ENCODE measurements at regions of chr1 and their contacts with region 1.

Region 1: DNA sequence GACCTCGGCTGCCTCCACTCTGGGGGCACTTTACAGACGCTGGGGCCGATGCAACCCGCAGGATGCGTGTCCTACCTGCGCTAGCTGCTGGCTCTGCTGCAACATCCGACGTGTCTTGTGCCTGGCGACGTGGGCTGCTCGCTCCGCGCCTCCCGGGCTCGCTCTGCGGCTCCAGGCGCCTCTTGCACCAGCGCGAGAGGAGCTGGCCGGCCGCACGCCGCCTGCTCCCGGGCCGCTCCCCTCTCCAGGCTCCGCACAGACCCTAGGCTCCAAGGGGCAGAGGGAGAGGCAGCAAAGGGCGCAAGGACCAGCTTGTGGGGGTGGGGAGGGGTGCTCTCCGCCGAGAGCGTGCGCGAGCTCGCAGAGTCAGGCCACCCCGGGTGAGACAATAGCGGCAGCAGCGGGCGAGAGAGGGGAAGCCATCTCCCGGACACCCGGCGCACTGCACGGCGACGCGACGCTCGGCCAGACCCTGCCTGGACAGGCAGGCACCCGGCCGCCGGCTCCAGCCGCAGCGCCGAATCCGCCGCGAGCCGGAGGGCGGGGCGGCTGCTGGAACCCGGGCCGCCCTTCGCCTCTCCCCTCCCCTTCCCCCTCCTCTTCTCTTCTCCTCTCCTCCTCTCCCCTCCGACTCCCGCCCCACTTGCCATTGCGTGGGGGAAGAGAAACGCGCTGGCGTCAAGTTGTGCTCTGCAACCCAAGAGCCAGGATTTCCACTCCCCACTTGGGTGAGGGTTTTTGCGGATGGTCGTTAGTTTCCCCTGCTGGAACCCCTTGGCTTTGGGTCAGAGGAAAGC is at the start of gene PIK3C2B:
- DNase-seq: peak; percentile 54 to 80 (median 72)
- ATAC-seq: peak; percentile 83
- H3K4me3 ChIP-seq: peak within 1 kb of the TSS; percentile 84
- H3K4me3 Mint-ChIP-seq: peak within 1 kb of the TSS; percentile 92 to 98 (median 95)
- H3K27ac ChIP-seq: peak within 1 kb of the TSS; percentile 87
- H3K27ac Mint-ChIP-seq: peak within 1 kb of the TSS; percentile 83 to 98 (median 93)
- H3K4me1 ChIP-seq: peaks cover 23 to 35% of the 10 kb centered on the region in 2 donors
- H3K4me1 Mint-ChIP-seq: peaks cover 37 to 89% (median 73%) of the 10 kb centered on the region in 7 donors
- H3K27me3 ChIP-seq: no peaks in the 10 kb centered on the region
- H3K27me3 Mint-ChIP-seq: peaks cover 0 to 2% (median 0%) of the 10 kb centered on the region in 5 donors
- total RNA-seq, gene PIK3C2B: 26.8 to 41.9 (median 32.5) TPM

Region 2: GRCh38 chr1:204431310-204432165 is 62.9 kb before region 1 on chr1:
- CTCF ChIA-PET with region 1: interaction called, 434 read pairs
- POLR2A ChIA-PET with region 1: interaction called, 5 read pairs
- intact Hi-C with region 1: loop called (anchors 2 kb)
- DNase-seq: peak; percentile 52 to 75 (median 69)
- ATAC-seq: peak; percentile 88
- H3K4me3 ChIP-seq: no peak overlapping the region
- H3K4me3 Mint-ChIP-seq: no peak overlapping the region
- H3K27ac ChIP-seq: no peak overlapping the region
- H3K27ac Mint-ChIP-seq: peak overlapping the region in 5 of 9 donors; percentile 6 to 69 (median 42)
- H3K4me1 ChIP-seq: no peaks in the 10 kb centered on the region
- H3K4me1 Mint-ChIP-seq: peaks cover 0 to 13% (median 4%) of the 10 kb centered on the region in 7 donors
- H3K27me3 ChIP-seq: no peaks in the 10 kb centered on the region
- H3K27me3 Mint-ChIP-seq: no peaks in the 10 kb centered on the region

Region 3: DNA sequence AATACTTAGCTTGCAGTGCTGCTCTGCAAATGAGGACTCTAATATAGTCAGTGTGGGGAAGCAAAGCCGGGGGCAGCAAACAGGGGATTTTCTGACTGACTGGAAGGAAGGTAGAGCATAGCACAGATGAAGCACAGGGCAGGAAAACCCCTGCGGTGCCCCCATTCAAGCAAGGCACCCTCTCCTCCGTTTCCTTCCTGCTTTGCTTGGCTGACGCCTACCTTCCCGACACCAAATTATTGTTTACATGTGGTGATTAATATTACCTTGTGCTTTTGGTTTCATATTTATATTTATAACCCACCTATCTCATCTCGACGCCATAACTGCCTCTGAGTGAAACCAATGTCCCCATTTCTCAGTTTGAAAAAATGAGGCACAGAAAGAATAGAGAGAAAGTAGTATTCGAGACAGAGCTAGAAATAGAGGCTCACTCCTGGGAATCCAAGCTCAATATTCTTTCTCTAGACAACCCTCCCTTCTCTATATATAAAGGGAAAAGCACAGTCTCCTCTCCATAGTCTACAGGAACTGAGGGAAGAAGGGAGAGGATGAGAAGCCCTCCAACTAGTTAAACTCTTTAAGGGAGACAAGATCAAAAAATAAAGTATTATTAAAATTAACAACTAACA is 41.2 kb before region 1 on chr1:
- CTCF ChIA-PET with region 1: interaction called, 434 read pairs
- POLR2A ChIA-PET with region 1: interaction called, 4 read pairs
- intact Hi-C with region 1: loop called in 1 of 2 experiments (anchors 1 kb)
- DNase-seq: peak; percentile 27 to 88 (median 67)
- ATAC-seq: peak; percentile 97
- H3K4me3 ChIP-seq: peak overlapping the region; percentile 16
- H3K4me3 Mint-ChIP-seq: peak overlapping the region; percentile 17 to 82 (median 54)
- H3K27ac ChIP-seq: peak overlapping the region; percentile 61
- H3K27ac Mint-ChIP-seq: peak overlapping the region; percentile 79 to 95 (median 88)
- H3K4me1 ChIP-seq: peaks cover 11 to 14% of the 10 kb centered on the region in 2 donors
- H3K4me1 Mint-ChIP-seq: peaks cover 7 to 35% (median 27%) of the 10 kb centered on the region in 7 donors
- H3K27me3 ChIP-seq: no peaks in the 10 kb centered on the region
- H3K27me3 Mint-ChIP-seq: no peaks in the 10 kb centered on the region

Region 4: GRCh38 chr1:204480515-204480914 is 14.0 kb before region 1 on chr1:
- CTCF ChIA-PET with region 1: interaction called, 4 read pairs
- POLR2A ChIA-PET with region 1: interaction called, 6 read pairs
- intact Hi-C with region 1: loop called in 1 of 2 experiments (anchors 2 kb)
- DNase-seq: no peak
- ATAC-seq: peak; percentile 26
- H3K4me3 ChIP-seq: no peak overlapping the region
- H3K4me3 Mint-ChIP-seq: peak overlapping the region in 7 of 10 donors; percentile 5 to 69 (median 61)
- H3K27ac ChIP-seq: no peak overlapping the region
- H3K27ac Mint-ChIP-seq: peak overlapping the region in 6 of 9 donors; percentile 43 to 84 (median 74)
- H3K4me1 ChIP-seq: peaks cover 13 to 44% of the 10 kb centered on the region in 2 donors
- H3K4me1 Mint-ChIP-seq: peaks cover 40 to 89% (median 80%) of the 10 kb centered on the region in 7 donors
- H3K27me3 ChIP-seq: no peaks in the 10 kb centered on the region
- H3K27me3 Mint-ChIP-seq: no peaks in the 10 kb centered on the region

Measured in naive thymus-derived CD4-positive, alpha-beta T cell (primary cell).